ENCODE measurements at regions of chr2 and their contacts with region 1.

Region 1: GRCh38 chr2:3728104-3729054 is 25.0 kb downstream of the DCDC2C start:
- DNase-seq: peak; percentile 44
- ATAC-seq: peak; percentile 47
- H3K4me3 ChIP-seq: no peak overlapping the region
- H3K27ac ChIP-seq: no peak overlapping the region
- H3K4me1 ChIP-seq: no peaks in the 10 kb centered on the region
- H3K27me3 ChIP-seq: peaks cover 8 to 85% of the 10 kb centered on the region in 2 experiments
- CTCF ChIP-seq: peak; percentile 70
- EP300 ChIP-seq: no peak
- POLR2A ChIP-seq: no peak
- RAD21 ChIP-seq: no peak

Region 2: GRCh38 chr2:3756306-3756705 is 27.9 kb after region 1 on chr2:
- CTCF ChIA-PET with region 1: no interaction called
- POLR2A ChIA-PET with region 1: no interaction called
- in situ Hi-C with region 1: no loop called
- intact Hi-C with region 1: no loop called
- DNase-seq: no peak
- ATAC-seq: no peak
- H3K4me3 ChIP-seq: no peak overlapping the region
- H3K27ac ChIP-seq: no peak overlapping the region
- H3K4me1 ChIP-seq: no peaks in the 10 kb centered on the region
- H3K27me3 ChIP-seq: peaks cover 9 to 49% of the 10 kb centered on the region in 2 experiments
- CTCF ChIP-seq: no peak
- EP300 ChIP-seq: no peak
- POLR2A ChIP-seq: no peak
- RAD21 ChIP-seq: no peak

Region 3: DNA sequence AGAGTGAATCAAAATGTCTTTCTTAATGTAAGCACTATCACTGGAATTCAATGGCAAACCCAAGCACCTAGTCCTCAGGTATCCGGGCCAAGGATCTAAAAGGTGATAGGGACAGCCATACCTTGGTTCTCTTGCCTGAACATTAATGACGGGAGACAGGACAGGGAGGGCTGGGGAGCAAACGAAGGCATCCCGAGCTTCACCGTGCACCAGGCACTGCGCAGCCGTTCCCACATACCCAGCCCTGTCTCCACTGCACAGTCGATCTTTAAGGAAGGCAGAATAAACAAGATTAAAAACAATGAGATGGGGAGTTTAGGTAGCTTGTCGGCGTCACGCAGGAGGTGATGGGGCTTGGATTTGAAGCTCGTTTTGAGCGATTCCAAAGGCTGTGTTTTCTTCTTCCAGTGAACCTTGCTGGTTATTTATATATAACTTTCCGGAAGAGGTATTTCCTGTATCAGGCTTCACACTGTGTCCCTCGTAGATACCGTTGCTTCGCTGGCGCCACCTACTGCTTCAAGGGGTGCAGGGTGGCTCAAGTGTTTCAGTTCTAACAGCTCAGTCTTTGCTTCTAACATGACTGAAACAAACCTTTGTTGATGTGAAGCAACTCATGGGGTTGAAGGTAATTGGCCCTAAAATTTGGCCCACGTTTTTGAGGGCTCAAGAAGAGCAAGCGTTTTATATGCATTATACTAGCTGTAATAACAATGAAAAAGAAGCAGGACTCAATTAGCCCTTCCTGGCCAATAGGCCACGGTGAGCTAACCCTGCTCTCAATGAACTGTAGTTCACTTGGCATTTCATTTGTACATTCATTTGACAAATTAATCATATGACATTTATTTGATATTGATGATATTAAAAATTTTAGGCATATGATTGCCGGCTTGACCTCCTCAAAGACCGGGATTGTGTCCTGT is 52.4 kb after region 1 on chr2:
- CTCF ChIA-PET with region 1: interaction called, 15 read pairs
- POLR2A ChIA-PET with region 1: no interaction called
- in situ Hi-C with region 1: no loop called
- intact Hi-C with region 1: loop called (anchors 1 kb)
- DNase-seq: peak; percentile 75
- ATAC-seq: peak; percentile 98
- H3K4me3 ChIP-seq: peak overlapping the region; percentile 1 to 45 (median 16); a peak in 2 of 6 replicates
- H3K27ac ChIP-seq: no peak overlapping the region
- H3K4me1 ChIP-seq: no peaks in the 10 kb centered on the region
- H3K27me3 ChIP-seq: peaks cover 5 to 69% of the 10 kb centered on the region in 2 experiments
- CTCF ChIP-seq: peak; percentile 87
- EP300 ChIP-seq: no peak
- POLR2A ChIP-seq: no peak
- RAD21 ChIP-seq: peak; percentile 53; the same call in 1 of the 2 replicates

Region 4: GRCh38 chr2:3805201-3805939 is 77.0 kb after region 1 on chr2:
- CTCF ChIA-PET with region 1: interaction called, 17 read pairs
- POLR2A ChIA-PET with region 1: no interaction called
- in situ Hi-C with region 1: no loop called
- intact Hi-C with region 1: loop called (anchors 1 kb)
- DNase-seq: peak; percentile 57
- ATAC-seq: peak; percentile 97
- H3K4me3 ChIP-seq: no peak overlapping the region
- H3K27ac ChIP-seq: no peak overlapping the region
- H3K4me1 ChIP-seq: no peaks in the 10 kb centered on the region
- H3K27me3 ChIP-seq: peaks cover 2 to 7% of the 10 kb centered on the region in 2 experiments; a peak in 1 of 5 replicates
- CTCF ChIP-seq: peak; percentile 78
- EP300 ChIP-seq: no peak
- POLR2A ChIP-seq: no peak
- RAD21 ChIP-seq: peak; percentile 59; the same call in 1 of the 2 replicates

Region 5: DNA sequence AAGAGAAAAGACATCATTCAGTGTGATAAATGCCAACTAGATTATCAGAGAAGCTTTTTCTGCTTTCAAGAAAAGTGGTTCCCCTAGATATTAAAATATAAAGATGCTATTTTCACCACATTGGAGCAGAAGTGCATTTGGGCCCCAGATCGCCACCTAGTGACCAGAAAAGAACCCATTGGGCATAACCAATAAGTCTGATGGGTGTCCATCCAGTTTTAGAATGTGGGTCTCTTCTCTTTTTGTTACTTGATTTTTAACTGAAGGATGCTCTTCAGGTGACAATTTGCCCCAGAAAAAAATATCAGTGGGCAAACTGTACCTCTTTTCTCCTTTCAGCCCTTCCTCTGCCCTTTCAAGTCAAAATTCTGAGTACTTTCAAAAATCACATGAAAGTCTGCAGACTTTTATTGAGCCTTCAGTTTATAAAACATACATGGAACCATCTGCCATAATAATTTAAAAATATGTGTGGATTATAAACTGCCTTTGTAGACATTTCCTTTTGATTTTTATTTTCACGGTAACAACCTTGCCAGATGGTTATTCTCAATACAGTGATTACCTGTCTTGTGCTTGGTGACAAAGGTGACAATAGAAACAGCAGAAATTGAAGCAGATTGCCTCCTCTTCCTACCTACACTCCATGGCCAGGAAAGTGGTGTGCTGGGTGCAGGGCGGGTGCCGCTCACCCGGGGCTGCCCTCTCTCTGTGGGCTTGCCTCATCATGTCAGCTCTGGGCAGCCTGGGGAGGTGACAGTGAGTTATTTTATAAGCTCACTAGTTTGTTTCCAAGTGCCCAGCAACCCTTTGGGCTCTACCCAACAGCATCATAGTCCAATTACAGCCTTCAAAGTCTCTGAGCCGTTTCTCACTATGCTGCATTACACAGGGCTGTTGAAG is 99.5 kb after region 1 on chr2:
- CTCF ChIA-PET with region 1: interaction called, 3 read pairs
- POLR2A ChIA-PET with region 1: no interaction called
- in situ Hi-C with region 1: no loop called
- intact Hi-C with region 1: loop called (anchors 1 kb)
- DNase-seq: no peak
- ATAC-seq: peak; percentile 83
- H3K4me3 ChIP-seq: no peak overlapping the region
- H3K27ac ChIP-seq: no peak overlapping the region
- H3K4me1 ChIP-seq: no peaks in the 10 kb centered on the region
- H3K27me3 ChIP-seq: peaks cover 0 to 33% of the 10 kb centered on the region in 2 experiments; a peak in 2 of 5 replicates
- CTCF ChIP-seq: peak; percentile 55
- EP300 ChIP-seq: no peak
- POLR2A ChIP-seq: no peak
- RAD21 ChIP-seq: no peak

Measured in HepG2 (cell line).